GM10248 (cell line): ENCODE measurements at regions of chr1 and their contacts with region 1.

Region 1: DNA sequence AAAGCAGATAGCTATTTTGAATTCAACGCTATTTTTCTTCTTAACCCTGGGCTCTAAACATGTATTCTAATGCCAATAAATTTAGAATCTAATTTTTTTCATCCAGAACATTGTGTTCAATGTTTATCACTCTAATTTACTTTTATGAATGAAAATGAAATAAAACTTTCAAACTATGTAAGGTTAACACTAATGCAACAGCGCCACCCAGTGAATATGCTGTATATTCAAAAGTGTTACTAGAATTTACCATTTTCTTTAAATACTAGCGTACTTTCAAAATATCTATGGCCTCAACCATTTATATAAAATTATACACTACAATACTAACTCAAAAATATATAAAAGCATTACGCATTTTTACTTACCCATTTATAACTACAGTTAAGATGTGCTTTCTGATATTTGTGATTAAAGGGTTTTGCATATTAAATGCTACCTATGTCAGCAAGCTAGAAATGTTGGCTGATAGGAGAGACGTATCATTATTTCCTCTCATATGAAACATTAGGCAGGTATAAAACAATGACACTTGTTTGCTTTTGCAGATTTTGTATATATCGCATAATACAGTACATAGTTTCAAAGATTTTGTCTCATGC is 5.9 kb upstream of the NUF2 start:
- DNase-seq: no peak
- CTCF ChIP-seq: peak; percentile 51

Region 2: DNA sequence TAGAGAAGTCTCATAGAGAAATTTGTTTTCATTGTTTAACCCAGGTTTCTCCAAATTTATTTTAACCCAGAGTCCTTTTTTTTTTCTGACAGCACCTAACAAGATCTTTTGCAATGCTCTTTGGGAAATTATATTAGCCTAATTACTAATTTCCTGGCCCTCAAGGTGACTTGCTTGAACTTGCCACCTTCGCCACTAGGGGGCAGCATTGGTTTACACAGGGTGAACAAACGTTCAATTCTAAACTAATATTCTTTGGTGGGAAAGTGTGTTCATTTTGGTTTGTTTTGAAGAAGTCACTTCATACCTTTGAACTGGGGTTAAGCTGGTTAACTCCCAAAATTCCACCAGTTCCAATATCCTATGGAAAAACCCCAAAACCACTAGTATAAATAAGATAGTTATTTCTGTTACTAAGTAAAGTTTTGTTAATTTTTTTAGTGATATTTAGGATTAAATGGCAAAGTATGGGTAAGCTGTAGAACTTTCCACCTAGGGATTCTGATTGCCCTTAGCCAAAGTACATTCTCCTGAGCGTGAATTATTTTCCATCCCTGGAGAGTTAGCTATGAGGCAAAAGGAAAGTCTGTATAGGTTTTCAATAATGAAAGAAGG is 467.9 kb before region 1 on chr1:
- CTCF ChIA-PET with region 1: interaction called, 34 read pairs
- POLR2A ChIA-PET with region 1: no interaction called
- DNase-seq: peak; percentile 67
- CTCF ChIP-seq: peak; percentile 92

Region 3: GRCh38 chr1:162854245-162854882 is 461.5 kb before region 1 on chr1:
- CTCF ChIA-PET with region 1: interaction called, 34 read pairs
- POLR2A ChIA-PET with region 1: no interaction called
- DNase-seq: peak; percentile 53
- CTCF ChIP-seq: peak; percentile 73

Region 4: DNA sequence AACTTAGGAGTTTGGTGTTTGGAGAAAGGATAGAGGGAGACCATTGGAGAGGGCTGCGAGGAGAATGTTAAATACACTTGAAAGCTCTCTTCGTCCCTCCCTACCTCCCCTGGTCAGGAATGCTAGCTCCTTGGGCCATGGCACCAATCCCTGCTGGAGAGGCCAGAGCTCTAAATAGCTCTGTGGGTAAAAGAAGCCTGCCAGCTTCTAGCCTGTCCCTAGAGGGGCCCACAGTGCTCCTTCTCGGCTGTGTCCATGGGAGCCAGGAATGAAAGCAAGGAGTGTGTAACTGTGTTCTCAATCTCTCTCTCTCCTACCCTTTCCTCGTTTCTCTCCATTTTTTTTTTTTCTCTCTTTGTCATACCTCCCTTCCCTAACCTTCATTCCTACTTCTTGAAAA is 454.8 kb before region 1 on chr1 and contains the start of gene CCDC190:
- CTCF ChIA-PET with region 1: interaction called, 11 read pairs
- POLR2A ChIA-PET with region 1: no interaction called
- DNase-seq: no peak
- CTCF ChIP-seq: no peak

Region 5: DNA sequence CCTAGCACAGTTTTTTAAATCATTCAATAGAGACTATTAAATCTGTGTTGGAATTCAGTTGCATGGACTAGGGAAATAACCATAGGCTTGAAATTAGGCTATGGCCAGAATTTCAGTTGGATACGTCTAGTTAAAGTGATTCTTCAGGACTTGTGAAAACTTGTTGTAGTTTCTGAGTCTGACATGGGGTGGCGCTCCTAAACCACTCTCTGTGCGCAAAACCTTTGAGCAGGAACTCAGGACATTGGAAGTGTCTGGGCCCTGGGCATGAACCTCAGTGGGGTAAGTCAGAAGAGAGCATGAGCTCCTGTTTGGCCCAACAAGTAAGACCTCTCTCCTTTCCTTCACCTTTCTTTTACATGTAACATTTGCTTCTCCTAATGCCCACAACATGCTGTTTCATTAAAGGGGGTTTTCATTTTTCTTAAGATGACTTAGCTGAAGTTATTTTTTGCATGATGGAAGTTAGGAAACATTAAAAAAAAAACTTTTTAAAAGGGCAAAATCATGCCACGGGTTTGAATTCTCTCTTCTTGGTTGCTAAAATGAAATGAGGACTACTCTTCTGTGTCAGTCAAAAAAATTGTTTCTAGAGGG is 437.8 kb before region 1 on chr1:
- CTCF ChIA-PET with region 1: interaction called, 21 read pairs
- POLR2A ChIA-PET with region 1: no interaction called
- DNase-seq: peak; percentile 14
- CTCF ChIP-seq: peak; percentile 37

Region 6: DNA sequence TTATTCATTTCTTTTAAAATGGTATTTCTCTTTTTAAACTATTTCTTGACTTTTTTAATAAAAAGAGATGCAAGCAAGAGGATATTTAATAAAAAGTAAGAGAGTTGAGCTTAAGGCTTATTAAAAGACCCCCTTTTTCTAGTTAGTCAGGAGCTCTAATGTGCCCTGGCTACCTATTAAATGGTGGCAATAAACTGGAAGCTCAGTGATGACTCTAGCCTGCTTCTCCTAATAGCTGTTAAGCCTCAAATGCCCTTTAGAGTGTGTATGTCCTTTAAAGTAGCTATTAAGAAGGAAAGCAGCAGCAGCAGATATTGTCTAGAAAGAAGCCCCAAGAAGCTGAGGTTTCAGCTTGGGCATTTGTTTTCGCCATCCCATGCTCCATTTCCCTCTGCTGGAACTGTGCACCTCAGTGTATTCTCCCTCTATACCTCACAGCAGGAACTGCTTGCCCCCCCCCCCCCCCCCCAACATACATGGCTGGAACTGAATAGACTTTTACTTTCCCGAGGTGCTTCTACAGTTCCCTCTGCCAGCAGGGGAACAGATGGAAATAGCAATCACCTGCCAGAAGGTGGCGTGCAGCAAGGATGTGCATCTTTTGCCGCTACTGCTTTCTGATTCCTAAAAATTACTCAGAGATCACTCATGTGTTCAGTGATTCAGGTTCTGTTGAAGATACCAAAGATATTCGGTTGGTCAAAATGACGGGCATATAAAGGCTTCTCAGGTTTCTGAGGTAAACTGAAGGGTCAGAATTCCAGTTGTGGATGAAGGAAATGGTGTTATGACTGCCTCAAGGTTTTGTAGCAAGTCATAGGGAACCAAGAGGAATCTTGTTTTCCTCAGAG is 244.2 kb before region 1 on chr1:
- CTCF ChIA-PET with region 1: interaction called, 62 read pairs
- POLR2A ChIA-PET with region 1: no interaction called
- DNase-seq: peak; percentile 43
- CTCF ChIP-seq: peak; percentile 77

Region 7: DNA sequence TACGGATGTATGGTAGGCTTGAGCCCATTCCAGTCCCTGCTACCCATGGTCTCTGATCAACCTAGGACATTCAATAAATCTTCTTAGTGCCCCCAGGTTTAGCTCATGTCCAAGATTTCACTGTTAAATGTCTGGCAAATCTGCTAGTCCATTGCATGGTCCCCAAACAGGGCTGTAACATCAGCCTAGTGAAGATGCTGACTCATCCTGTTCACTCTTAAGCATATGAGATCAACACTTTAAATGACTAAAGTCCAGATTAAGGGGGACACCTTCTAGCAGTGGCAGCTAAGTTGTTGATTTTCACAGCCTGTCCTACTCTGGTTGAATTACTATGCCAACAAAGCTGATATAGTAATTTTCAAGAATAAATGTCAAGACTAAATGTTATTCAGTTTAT is 40.7 kb before region 1 on chr1:
- CTCF ChIA-PET with region 1: no interaction called
- POLR2A ChIA-PET with region 1: no interaction called
- DNase-seq: no peak
- CTCF ChIP-seq: no peak

Region 8: DNA sequence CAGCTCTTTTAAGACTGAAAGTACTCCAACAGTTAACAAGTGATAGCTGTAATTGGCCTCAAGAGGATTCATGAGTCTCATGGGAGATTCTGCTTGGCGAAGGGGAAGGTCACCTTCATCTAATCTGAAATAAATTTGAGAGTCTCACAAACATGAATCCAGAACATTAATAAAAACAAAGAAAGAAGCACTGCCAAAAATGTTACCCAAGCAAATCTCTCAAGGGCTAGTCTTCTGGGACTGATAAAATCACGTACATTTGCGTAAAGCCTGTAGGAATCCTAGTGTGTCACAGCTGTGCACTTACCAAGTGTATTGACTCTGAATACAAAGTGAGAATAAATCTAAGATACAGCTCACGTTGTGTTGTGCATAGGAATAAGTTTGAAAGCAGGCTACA is 15.3 kb before region 1 on chr1:
- CTCF ChIA-PET with region 1: interaction called, 62 read pairs
- POLR2A ChIA-PET with region 1: no interaction called
- DNase-seq: no peak
- CTCF ChIP-seq: no peak